ENCODE measurements at regions of chr7 and their contacts with region 1.

Region 1: GRCh38 chr7:43700059-43700501 is 29.2 kb downstream of the COA1 start:
- DNase-seq: peak; percentile 59
- H3K4me3 ChIP-seq: peak overlapping the region in 1 of 2 experiments; percentile 10; a peak in 1 of 4 replicates
- H3K27ac ChIP-seq: peak overlapping the region in 1 of 2 experiments; percentile 74; a peak in 2 of 4 replicates
- H3K4me1 ChIP-seq: peaks cover 12 to 40% of the 10 kb centered on the region in 2 experiments; a peak in 3 of 4 replicates
- H3K27me3 ChIP-seq: no peaks in the 10 kb centered on the region
- CTCF ChIP-seq: peak; percentile 94
- EP300 ChIP-seq: no peak
- RAD21 ChIP-seq: peak; percentile 98

Region 2: DNA sequence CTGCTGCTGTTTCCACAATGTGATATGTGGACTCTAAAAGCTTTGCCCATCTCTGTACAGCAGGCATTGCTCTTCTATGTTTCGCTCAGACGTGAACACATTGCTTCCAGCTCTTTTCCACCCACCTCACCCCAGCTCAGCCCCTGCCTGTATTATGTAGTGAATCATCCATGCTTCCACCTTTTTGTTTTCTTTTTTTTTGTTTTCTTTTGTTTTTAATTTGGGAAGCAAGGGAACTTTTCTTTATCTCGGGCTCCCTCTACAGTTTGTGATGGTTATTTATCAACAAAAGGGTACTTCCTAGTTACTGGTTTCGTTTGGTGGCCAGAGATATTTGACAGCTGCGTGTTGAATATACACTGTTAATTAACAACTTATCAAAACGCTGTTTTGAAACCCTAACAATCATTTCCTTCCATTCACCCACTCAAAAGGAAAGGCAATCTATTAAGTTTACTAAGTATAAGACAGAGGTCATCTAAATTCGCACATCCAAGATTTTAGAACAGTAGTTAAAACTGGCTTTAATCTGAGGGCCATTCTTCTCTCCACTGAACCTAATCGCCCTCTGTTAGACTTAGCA is 245.1 kb before region 1 on chr7:
- CTCF ChIA-PET with region 1: interaction called, 24 read pairs
- POLR2A ChIA-PET with region 1: no interaction called
- DNase-seq: peak; percentile 70
- H3K4me3 ChIP-seq: no peak overlapping the region; a peak in 1 of 4 replicates
- H3K27ac ChIP-seq: no peak overlapping the region
- H3K4me1 ChIP-seq: peaks cover 0 to 2% of the 10 kb centered on the region in 2 experiments; a peak in 1 of 4 replicates
- H3K27me3 ChIP-seq: peaks cover 4% of the 10 kb centered on the region; the same call in 1 of the 2 replicates
- CTCF ChIP-seq: peak; percentile 70
- EP300 ChIP-seq: no peak
- RAD21 ChIP-seq: peak; percentile 76

Region 3: GRCh38 chr7:43572516-43573049 is 127.5 kb before region 1 on chr7:
- CTCF ChIA-PET with region 1: interaction called, 10 read pairs
- POLR2A ChIA-PET with region 1: no interaction called
- DNase-seq: no peak
- H3K4me3 ChIP-seq: no peak overlapping the region
- H3K27ac ChIP-seq: peak overlapping the region in 1 of 2 experiments; percentile 85; a peak in 2 of 4 replicates
- H3K4me1 ChIP-seq: peaks cover 0 to 3% of the 10 kb centered on the region in 2 experiments; a peak in 1 of 4 replicates
- H3K27me3 ChIP-seq: no peaks in the 10 kb centered on the region
- CTCF ChIP-seq: no peak
- EP300 ChIP-seq: peak in 1 of 2 experiments; percentile 76; a peak in 1 of 4 replicates
- RAD21 ChIP-seq: no peak

Region 4: GRCh38 chr7:43647673-43648472 is 52.2 kb before region 1 on chr7:
- CTCF ChIA-PET with region 1: interaction called, 12 read pairs
- POLR2A ChIA-PET with region 1: no interaction called
- DNase-seq: peak; percentile 59
- H3K4me3 ChIP-seq: peak overlapping the region; percentile 20 to 44; a peak in 3 of 4 replicates
- H3K27ac ChIP-seq: peak overlapping the region; percentile 98 to 100
- H3K4me1 ChIP-seq: peaks cover 65 to 68% of the 10 kb centered on the region in 2 experiments
- H3K27me3 ChIP-seq: no peaks in the 10 kb centered on the region
- CTCF ChIP-seq: no peak
- EP300 ChIP-seq: peak; percentile 96 to 100
- RAD21 ChIP-seq: no peak

Region 5: DNA sequence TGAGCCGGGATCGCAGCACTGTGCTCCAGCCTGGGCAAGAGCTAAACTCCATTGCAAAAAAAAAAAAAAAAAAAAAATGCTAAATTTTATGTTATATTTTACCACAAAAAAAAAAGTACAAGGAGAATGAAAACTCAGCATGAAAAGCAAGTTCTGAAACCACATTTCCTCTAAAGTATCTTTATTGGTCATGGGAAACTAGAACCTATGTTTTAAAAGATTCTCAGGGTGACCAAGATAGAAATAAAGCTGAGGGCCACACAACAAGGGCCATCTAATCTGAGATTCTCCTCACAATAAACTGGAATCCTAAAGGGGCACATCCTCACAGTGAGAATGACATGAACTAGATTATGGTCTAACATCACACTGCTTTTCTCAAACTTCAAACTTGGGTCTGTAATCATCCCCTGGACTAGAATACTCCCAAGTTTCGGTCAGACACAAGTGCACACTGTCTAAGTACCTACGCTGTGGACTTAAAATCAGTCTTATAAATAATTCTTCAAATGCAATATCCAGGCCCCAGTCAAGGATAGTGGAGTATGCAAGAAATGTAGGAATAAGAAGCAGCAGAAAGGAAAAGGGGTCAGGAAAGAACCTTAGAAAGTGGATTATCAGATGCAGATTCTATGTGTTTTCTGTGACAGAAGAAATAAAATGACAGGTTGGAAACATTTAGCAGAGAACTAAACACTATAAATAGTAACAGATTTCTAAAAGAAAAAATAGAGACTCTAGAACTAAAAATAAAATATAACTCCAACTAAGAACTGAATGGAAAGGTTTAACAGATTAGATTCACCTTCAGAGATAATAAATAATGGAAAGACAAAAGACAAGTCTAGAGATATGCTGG is 20.6 kb before region 1 on chr7:
- CTCF ChIA-PET with region 1: interaction called, 55 read pairs
- POLR2A ChIA-PET with region 1: no interaction called
- DNase-seq: no peak
- H3K4me3 ChIP-seq: no peak overlapping the region
- H3K27ac ChIP-seq: peak overlapping the region; percentile 62 to 77
- H3K4me1 ChIP-seq: peaks cover 0 to 12% of the 10 kb centered on the region in 2 experiments
- H3K27me3 ChIP-seq: no peaks in the 10 kb centered on the region
- CTCF ChIP-seq: no peak
- EP300 ChIP-seq: no peak
- RAD21 ChIP-seq: no peak

Region 6: GRCh38 chr7:43721193-43721806 is 21.2 kb after region 1 on chr7:
- CTCF ChIA-PET with region 1: interaction called, 39 read pairs
- POLR2A ChIA-PET with region 1: no interaction called
- DNase-seq: peak; percentile 45
- H3K4me3 ChIP-seq: no peak overlapping the region; a peak in 1 of 4 replicates
- H3K27ac ChIP-seq: no peak overlapping the region; a peak in 1 of 4 replicates
- H3K4me1 ChIP-seq: no peaks in the 10 kb centered on the region; a peak in 1 of 4 replicates
- H3K27me3 ChIP-seq: no peaks in the 10 kb centered on the region
- CTCF ChIP-seq: peak; percentile 99
- EP300 ChIP-seq: no peak
- RAD21 ChIP-seq: peak; percentile 79

Region 7: DNA sequence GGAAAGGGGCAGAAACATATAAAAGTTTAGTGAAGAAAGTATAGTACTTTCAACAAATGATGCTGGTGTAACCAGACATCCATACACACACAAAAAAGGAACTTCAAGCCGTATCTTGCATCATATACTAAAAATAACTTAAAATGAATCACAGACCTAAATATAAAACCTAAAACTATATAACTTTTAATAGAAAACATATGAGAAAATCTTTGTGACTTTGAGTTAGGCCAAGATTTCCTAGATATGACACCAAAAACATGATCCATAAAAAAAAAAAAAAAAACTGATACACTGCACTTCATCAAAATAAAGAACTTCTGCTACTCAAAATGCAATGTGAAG is 749.5 kb after region 1 on chr7:
- CTCF ChIA-PET with region 1: no interaction called
- POLR2A ChIA-PET with region 1: no interaction called
- DNase-seq: no peak
- H3K4me3 ChIP-seq: no peak overlapping the region
- H3K27ac ChIP-seq: peak overlapping the region in 1 of 2 experiments; percentile 84; a peak in 2 of 4 replicates
- H3K4me1 ChIP-seq: peaks cover 6 to 10% of the 10 kb centered on the region in 2 experiments; a peak in 2 of 4 replicates
- H3K27me3 ChIP-seq: no peaks in the 10 kb centered on the region
- CTCF ChIP-seq: no peak
- EP300 ChIP-seq: no peak
- RAD21 ChIP-seq: no peak